Activated B cell treated with CpG ODN at 0.5 μM for 24 hours (primary cell): ENCODE measurements at regions of chr12 and their contacts with region 1.

Region 1: GRCh38 chr12:94101738-94102660 is 46.4 kb upstream of the PLXNC1 start:
- DNase-seq: peak; percentile 64
- ATAC-seq: peak; percentile 87
- H3K4me3 Mint-ChIP-seq: peak overlapping the region; percentile 83
- H3K27ac Mint-ChIP-seq: no peak overlapping the region
- H3K4me1 Mint-ChIP-seq: peaks cover 6% of the 10 kb centered on the region
- H3K27me3 Mint-ChIP-seq: peaks cover 54% of the 10 kb centered on the region
- CTCF ChIP-seq: peak; percentile 34

Region 2: GRCh38 chr12:93098077-93098476 is 1003.9 kb before region 1 on chr12:
- CTCF ChIA-PET with region 1: interaction called, 13 read pairs
- POLR2A ChIA-PET with region 1: no interaction called
- intact Hi-C with region 1: loop called (anchors 1 kb)
- DNase-seq: peak; percentile 23
- ATAC-seq: peak; percentile 98
- H3K4me3 Mint-ChIP-seq: no peak overlapping the region
- H3K27ac Mint-ChIP-seq: peak overlapping the region; percentile 46
- H3K4me1 Mint-ChIP-seq: peaks cover 18% of the 10 kb centered on the region
- H3K27me3 Mint-ChIP-seq: no peaks in the 10 kb centered on the region
- CTCF ChIP-seq: peak; percentile 34

Region 3: DNA sequence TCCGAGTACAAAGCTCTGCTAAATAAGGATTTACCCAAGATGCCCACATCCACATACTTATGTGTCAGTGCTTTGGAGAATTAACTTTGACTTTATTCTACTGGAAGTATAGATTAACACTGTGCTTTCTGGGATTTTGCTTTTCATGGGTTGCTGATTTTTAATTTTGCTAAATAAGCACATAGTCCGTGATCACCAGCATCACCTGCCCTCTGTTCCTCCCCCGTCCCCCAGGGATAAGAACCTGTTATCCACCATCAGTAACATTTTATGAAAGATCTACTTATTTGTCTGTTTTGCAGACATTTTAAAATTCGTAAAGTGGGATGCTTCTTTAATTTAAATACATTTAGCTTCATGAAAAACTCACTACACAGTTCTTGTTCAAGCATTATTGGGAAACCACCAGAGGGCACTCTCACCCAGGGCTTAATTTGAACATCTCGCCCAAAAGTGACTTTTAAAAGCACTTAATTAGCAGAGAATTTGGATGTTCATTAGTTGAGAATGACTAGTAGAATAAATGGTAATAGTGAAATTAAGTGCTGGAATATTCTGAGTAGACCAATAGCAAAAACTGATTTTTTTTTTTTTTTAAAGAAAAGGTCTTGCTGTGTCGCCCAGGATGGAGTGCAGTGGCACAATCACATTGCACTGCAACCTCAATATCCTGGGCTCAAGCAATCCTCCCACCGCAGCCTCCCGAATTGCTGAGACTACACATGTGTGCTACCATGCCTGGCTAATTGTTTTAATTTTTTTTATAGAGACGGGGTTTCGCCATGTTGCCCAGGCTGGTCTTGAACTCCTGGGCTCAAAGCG is 599.0 kb before region 1 on chr12:
- CTCF ChIA-PET with region 1: interaction called, 329 read pairs
- POLR2A ChIA-PET with region 1: interaction called, 19 read pairs
- intact Hi-C with region 1: loop called (anchors 1 kb)
- DNase-seq: no peak
- ATAC-seq: no peak
- H3K4me3 Mint-ChIP-seq: no peak overlapping the region
- H3K27ac Mint-ChIP-seq: no peak overlapping the region
- H3K4me1 Mint-ChIP-seq: no peaks in the 10 kb centered on the region
- H3K27me3 Mint-ChIP-seq: no peaks in the 10 kb centered on the region
- CTCF ChIP-seq: peak; percentile 78

Region 4: GRCh38 chr12:93766796-93767523 is 335.0 kb before region 1 on chr12:
- CTCF ChIA-PET with region 1: interaction called, 33 read pairs
- POLR2A ChIA-PET with region 1: no interaction called
- intact Hi-C with region 1: loop called (anchors 1 kb)
- DNase-seq: no peak
- ATAC-seq: no peak
- H3K4me3 Mint-ChIP-seq: no peak overlapping the region
- H3K27ac Mint-ChIP-seq: no peak overlapping the region
- H3K4me1 Mint-ChIP-seq: peaks cover 18% of the 10 kb centered on the region
- H3K27me3 Mint-ChIP-seq: no peaks in the 10 kb centered on the region
- CTCF ChIP-seq: no peak

Region 5: GRCh38 chr12:94123127-94123526 is 21.1 kb after region 1 on chr12:
- CTCF ChIA-PET with region 1: interaction called, 11 read pairs
- POLR2A ChIA-PET with region 1: no interaction called
- intact Hi-C with region 1: no loop called
- DNase-seq: no peak
- ATAC-seq: no peak
- H3K4me3 Mint-ChIP-seq: no peak overlapping the region
- H3K27ac Mint-ChIP-seq: no peak overlapping the region
- H3K4me1 Mint-ChIP-seq: peaks cover 48% of the 10 kb centered on the region
- H3K27me3 Mint-ChIP-seq: no peaks in the 10 kb centered on the region
- CTCF ChIP-seq: no peak